A673 (cell line): ENCODE measurements at regions of chr10 and their contacts with region 1.

Region 1: DNA sequence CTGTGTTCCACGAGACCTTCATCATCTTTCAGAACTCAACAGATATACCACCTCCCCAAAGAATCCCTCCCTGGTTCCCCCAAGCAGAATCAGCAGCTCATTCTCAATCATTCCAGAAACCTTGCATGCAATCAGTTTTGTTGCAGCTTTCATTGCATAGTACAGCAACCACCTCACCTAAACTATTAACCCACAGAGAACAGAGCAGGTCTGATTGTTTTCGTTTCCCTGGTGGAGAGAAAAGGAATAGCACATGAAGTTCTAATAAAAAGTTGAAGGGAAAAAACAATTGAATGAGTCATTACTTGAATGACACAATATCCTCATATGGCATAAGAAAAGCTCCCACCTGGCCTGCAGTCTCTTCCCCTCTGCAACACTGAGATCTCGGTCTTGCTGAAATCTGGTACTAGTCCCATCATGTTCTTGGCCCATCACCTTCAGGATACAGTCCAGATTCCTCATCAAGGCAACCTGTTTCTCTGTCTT is 147.1 kb upstream of the GDF10 start:
- DNase-seq: no peak
- H3K4me3 ChIP-seq: no peak overlapping the region
- H3K27ac ChIP-seq: no peak overlapping the region
- H3K4me1 ChIP-seq: no peaks in the 10 kb centered on the region
- H3K27me3 ChIP-seq: no peaks in the 10 kb centered on the region
- CTCF ChIP-seq: peak; percentile 32; the same call in 1 of the 2 replicates

Region 2: GRCh38 chr10:47090903-47091302 is 62.0 kb before region 1 on chr10:
- CTCF ChIA-PET with region 1: no interaction called
- POLR2A ChIA-PET with region 1: no interaction called
- intact Hi-C with region 1: no loop called
- DNase-seq: peak; percentile 32
- H3K4me3 ChIP-seq: no peak overlapping the region
- H3K27ac ChIP-seq: no peak overlapping the region
- H3K4me1 ChIP-seq: no peaks in the 10 kb centered on the region
- H3K27me3 ChIP-seq: no peaks in the 10 kb centered on the region
- CTCF ChIP-seq: no peak

Region 3: GRCh38 chr10:47104786-47105385 is 48.0 kb before region 1 on chr10:
- CTCF ChIA-PET with region 1: no interaction called
- POLR2A ChIA-PET with region 1: no interaction called
- intact Hi-C with region 1: loop called (anchors 5 kb)
- DNase-seq: no peak
- H3K4me3 ChIP-seq: no peak overlapping the region
- H3K27ac ChIP-seq: no peak overlapping the region
- H3K4me1 ChIP-seq: no peaks in the 10 kb centered on the region
- H3K27me3 ChIP-seq: no peaks in the 10 kb centered on the region
- CTCF ChIP-seq: no peak

Region 4: DNA sequence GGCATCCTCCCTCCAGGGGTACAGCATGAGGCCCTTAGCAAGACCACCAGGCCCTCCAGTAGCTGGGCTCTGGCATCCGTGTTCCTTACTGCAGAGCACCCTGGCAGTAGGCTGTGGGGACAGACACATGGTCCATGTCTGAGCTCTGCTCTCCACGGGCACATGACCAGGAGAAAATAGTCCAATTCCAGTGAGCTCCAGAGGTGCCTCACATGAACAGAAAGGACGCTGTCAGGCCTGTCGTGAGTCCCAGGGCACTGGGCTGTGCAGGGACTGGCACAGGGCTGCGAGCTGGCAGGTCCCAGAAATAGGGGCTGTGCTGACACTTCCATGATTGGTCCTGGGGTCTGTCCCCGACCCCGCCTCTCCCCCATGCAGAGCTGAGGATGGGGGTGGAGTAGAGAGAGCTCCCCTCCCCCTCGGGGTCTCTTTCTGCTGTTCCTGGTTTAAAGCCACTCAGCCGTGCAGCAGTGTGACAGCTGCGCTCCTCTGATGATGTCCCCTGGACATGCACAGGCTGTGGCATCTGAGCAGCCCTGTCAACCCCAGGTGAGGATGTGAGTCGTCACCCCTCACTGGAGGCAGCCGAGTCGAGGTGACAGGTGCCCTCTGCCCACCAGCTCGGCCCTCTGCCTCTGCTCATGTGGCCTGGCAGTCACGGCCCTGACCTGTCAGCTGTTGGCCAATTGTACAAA is 256.4 kb after region 1 on chr10:
- CTCF ChIA-PET with region 1: no interaction called
- POLR2A ChIA-PET with region 1: no interaction called
- intact Hi-C with region 1: no loop called
- DNase-seq: no peak
- H3K4me3 ChIP-seq: no peak overlapping the region
- H3K27ac ChIP-seq: no peak overlapping the region
- H3K4me1 ChIP-seq: no peaks in the 10 kb centered on the region
- H3K27me3 ChIP-seq: no peaks in the 10 kb centered on the region
- CTCF ChIP-seq: no peak